ENCODE measurements at regions of chr11 and their contacts with region 1.

Region 1: DNA sequence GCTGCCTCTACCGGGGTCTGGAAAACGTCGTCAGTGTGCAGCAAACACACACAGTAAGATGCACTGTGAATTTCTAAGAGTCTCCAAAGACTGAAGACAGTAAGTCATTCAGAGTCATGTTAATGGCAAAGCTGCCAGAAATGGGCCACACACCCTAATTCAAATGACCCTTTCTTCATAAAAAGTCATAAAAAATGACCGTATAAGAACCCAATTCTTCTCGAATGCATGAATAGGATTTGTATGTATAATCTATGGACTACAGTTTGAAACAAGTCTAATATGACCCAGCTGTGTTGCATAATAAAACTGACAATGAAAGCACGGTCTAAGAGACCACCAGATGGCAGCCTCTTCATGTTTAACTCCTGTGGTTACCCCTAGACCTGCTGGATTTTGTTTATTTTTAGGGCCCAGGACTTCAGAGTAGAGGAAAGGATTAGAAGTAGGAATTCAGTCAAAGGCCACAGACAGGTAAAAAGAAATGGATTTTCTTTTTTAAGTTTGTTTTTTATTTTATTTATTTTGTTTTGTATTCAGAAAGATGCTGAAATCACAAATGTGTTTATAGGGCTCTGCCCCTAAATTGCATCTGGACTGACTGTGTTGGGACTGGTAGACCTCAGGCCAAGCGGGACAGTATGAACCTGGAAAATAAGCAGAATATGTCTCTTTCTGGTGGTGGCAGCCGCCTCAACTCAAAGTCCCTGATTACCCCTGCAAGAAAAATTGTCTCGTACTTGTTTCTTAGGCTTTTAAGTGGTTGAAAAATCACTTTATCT is 32.1 kb upstream of the SLC5A12 start:
- DNase-seq: peak in 1 of 2 donors; percentile 18
- ATAC-seq: peak in 7 of 8 donors; percentile 58 to 84 (median 81)
- H3K4me3 ChIP-seq: no peak overlapping the region
- H3K27ac ChIP-seq: no peak overlapping the region
- H3K4me1 ChIP-seq: no peaks in the 10 kb centered on the region
- H3K27me3 ChIP-seq: no peaks in the 10 kb centered on the region
- CTCF ChIP-seq: peak; percentile 39 to 73 (median 67)

Region 2: DNA sequence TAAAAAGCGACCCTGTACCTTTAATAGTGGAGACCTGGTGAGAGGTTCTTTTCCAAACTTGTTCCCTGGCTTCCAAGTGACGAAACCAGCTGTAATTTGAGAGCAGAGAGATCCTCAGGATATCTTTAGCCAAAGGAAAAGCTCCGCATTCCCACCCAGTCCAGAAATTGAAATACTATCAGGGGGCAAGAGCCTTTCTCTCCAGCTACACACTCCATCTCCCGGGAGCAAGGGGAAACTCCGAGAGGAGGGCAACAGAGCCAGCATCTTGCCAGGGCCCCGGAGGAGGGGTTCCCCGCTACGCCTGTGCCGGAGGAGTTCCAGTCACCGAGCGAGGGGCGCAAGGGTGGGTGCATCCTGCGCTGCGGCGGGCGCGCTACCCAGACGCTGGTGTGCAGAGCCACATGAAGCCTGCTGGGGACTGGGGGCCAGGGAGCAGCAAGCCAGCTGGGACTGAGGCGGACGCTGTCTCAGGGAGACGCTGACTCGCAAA is 240.1 kb after region 1 on chr11 and contains the start of gene FIBIN:
- intact Hi-C with region 1: loop called in 1 of 10 experiments (anchors 10 kb)
- DNase-seq: peak; percentile 24 to 27
- ATAC-seq: peak; percentile 31 to 69 (median 56)
- H3K4me3 ChIP-seq: peak within 1 kb of the TSS; percentile 19 to 64 (median 52)
- H3K27ac ChIP-seq: peak within 1 kb of the TSS; percentile 49 to 88 (median 80)
- H3K4me1 ChIP-seq: peaks cover 0 to 13% (median 0%) of the 10 kb centered on the region in 9 donors
- H3K27me3 ChIP-seq: peaks cover 0 to 20% (median 6%) of the 10 kb centered on the region in 7 donors
- CTCF ChIP-seq: no peak
- total RNA-seq, gene FIBIN: 3.5 to 13.8 (median 6.8) TPM

Region 3: DNA sequence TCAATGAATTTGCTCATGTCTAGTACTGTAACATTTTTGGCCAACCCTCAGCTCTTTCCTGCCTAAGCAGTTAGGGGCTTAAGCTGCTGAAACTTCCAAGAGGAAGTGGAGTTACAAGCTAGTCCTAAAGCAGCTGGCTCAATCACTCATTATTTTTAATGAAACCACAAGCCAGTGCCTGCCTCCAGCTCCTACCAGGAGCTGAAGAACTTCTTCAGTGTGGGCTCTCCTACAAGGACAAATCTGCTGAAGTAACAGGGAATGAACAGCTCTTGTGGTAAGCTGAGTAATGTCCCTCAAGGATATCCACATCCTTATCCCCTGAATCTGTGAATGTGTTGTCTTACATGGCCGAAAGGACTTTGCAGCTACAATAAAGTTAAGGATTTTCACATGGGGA is 399.2 kb after region 1 on chr11:
- intact Hi-C with region 1: loop called in 9 of 10 experiments (anchors 1 to 5 kb)
- DNase-seq: no peak
- ATAC-seq: no peak
- H3K4me3 ChIP-seq: no peak overlapping the region
- H3K27ac ChIP-seq: no peak overlapping the region
- H3K4me1 ChIP-seq: no peaks in the 10 kb centered on the region
- H3K27me3 ChIP-seq: no peaks in the 10 kb centered on the region
- CTCF ChIP-seq: no peak

Region 4: DNA sequence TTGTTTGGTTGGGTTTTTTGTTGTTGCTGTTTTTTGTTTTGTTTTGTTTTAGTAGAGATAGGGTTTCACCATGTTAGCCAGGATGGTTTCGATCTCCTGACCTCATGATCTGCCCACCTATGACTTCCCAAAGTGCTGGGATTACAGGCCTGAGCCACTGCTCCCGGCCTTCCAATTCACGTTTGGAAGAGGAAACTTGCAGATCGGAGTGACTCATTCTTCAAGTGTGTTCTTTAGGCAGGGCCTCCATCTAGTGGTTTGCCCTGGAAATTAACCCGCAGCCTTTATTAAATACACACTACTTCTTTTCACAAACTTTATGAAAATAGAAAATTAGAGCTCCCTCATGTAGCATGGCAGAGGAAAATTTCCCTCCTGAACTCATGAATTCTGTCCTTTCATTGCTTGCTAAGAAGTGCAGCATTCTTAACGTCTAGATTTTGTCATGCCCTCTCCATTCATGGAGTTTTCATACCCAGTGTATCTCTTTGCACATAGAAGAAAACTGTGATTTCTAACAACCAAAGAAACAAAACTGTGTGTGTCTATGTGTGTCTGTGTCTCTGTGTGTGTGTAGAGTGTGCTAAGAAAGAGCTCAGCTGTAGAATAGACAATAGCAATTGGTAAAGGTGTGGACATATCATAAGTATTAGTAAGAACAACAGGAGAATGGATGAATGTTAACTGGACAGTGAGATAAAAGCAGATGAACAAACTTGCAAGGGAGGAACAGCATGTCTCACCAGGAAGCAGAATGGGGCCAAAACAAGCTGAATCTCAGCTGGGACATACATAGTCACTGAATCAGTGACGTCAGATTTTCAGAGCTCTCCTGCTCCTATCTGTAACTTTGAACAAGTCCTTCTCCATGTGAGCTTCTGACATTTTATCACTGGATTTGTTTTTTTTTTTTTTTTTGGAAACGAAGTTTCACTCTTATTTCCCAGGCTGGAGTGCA is 405.1 kb after region 1 on chr11:
- intact Hi-C with region 1: loop called (anchors 1 to 5 kb)
- DNase-seq: peak in 1 of 2 donors; percentile 48
- ATAC-seq: peak; percentile 64 to 88 (median 84)
- H3K4me3 ChIP-seq: no peak overlapping the region
- H3K27ac ChIP-seq: no peak overlapping the region
- H3K4me1 ChIP-seq: no peaks in the 10 kb centered on the region
- H3K27me3 ChIP-seq: no peaks in the 10 kb centered on the region
- CTCF ChIP-seq: peak; percentile 49 to 82 (median 69)

Region 5: DNA sequence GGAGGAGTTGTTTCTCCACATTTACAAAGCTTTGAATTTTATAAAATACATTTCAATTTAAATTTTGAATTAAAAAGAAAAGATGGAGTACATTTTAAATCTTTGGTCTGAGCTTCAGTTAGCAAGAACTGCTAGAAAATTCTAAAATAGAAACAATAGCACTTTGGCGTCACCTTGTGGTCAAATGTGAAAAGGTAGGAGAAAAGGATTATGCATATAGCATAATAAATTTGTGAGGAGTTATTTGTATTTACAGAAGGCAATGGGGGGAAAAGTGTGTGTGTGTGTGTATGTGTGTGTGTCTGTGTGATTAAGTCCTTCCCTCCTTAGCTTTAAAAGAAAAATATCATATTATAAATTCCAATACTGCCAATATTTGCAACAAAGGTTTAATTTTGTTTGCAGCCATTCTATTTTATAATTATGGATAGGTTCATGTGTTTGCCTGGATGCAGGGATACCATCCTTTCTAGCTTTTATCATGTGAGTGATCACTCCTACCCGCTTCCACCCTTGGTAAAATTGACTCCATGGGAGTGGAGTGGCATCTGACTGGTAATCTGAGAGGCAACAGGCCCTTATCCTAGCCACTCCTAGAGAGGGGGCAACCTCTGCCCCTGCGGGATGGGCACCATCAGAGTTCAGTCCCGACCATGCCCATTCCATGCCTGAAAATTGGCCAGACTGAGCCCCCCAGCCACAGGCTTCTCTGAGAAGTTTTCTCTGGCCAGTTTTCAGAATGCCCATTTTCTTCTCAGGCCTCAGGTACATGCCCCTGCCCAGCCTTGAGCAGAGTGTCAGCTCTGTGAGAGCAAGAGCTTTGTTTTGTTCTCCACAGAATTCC is 732.2 kb after region 1 on chr11:
- intact Hi-C with region 1: loop called in 2 of 10 experiments (anchors 5 to 10 kb)
- DNase-seq: peak in 1 of 2 donors; percentile 45
- ATAC-seq: peak in 7 of 8 donors; percentile 31 to 59 (median 49)
- H3K4me3 ChIP-seq: no peak overlapping the region
- H3K27ac ChIP-seq: no peak overlapping the region
- H3K4me1 ChIP-seq: no peaks in the 10 kb centered on the region
- H3K27me3 ChIP-seq: no peaks in the 10 kb centered on the region
- CTCF ChIP-seq: peak; percentile 76 to 94 (median 89)

Region 6: GRCh38 chr11:27506200-27507182 is 752.6 kb after region 1 on chr11 and contains the start of gene LIN7C:
- intact Hi-C with region 1: loop called in 1 of 10 experiments (anchors 5 kb)
- DNase-seq: peak; percentile 94 to 98
- ATAC-seq: peak; percentile 99 to 100 (median 99)
- H3K4me3 ChIP-seq: peak within 1 kb of the TSS; percentile 68 to 93 (median 77)
- H3K27ac ChIP-seq: peak within 1 kb of the TSS; percentile 70 to 95 (median 91)
- H3K4me1 ChIP-seq: peaks cover 10 to 63% (median 49%) of the 10 kb centered on the region in 9 donors
- H3K27me3 ChIP-seq: no peaks in the 10 kb centered on the region
- CTCF ChIP-seq: peak in 4 of 9 donors; percentile 15 to 31 (median 23)
- total RNA-seq, gene LIN7C: 13.9 to 22.3 (median 17.6) TPM